CD4-positive, alpha-beta memory T cell (primary cell): ENCODE measurements at regions of chr19 and their contacts with region 1.

Region 1: DNA sequence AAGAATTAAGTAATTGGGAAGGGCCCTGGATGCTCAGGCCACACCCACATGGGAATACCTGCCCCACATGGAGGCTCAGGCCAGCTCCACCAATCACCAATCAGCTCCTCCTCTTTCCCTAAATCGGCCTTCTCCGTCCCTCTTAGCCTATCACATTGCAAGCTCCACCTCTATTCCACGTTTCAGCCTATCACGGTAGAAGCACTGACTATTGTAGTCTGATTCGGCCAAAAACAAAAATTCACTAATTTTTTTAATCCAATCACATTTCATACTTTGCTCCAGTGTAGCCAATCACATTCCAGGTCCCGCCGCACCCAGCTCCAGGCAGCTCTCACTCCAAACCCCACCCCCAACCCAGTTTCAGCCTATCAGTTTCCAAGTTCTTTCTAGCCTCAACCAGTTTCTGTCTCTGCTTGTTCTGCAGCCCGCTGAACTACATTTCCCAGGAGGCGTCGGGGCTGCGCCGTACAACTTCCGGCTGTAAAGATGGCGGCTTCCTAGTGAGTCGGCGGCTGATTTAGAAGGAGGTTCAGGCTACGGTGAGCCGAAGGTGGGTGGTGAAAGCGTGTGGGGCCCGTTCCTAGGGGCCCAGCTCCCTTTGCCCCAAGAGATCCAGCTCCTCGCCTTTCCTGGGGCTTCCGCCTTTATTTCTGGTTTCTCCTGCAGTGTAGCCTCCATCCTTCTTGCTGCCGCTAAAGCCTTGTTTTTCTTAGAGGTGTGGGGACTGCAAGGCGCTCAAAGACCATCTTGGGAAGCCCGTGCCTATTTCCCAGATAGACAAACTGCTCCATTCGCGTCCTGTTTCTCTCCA is at the start of gene BABAM1:
- DNase-seq: peak; percentile 97 to 99 (median 99)
- H3K4me3 ChIP-seq: peak within 1 kb of the TSS; percentile 90 to 98
- H3K4me3 Mint-ChIP-seq: peak within 1 kb of the TSS; percentile 83 to 92 (median 88)
- H3K27ac ChIP-seq: peak within 1 kb of the TSS; percentile 73
- H3K27ac Mint-ChIP-seq: peak within 1 kb of the TSS; percentile 81 to 95 (median 89)
- H3K4me1 ChIP-seq: peaks cover 26% of the 10 kb centered on the region
- H3K4me1 Mint-ChIP-seq: peaks cover 12 to 34% (median 26%) of the 10 kb centered on the region in 4 donors
- H3K27me3 ChIP-seq: no peaks in the 10 kb centered on the region
- H3K27me3 Mint-ChIP-seq: peaks cover 1 to 2% of the 10 kb centered on the region in 2 donors
- total RNA-seq, gene BABAM1: 101 to 112 TPM

Region 2: GRCh38 chr19:17075035-17075863 is 191.9 kb before region 1 on chr19 and contains the starts of genes HAUS8 and MYO9B:
- CTCF ChIA-PET with region 1: no interaction called
- POLR2A ChIA-PET with region 1: interaction called, 22 read pairs
- intact Hi-C with region 1: loop called (anchors 1 kb)
- DNase-seq: peak; percentile 99 to 100 (median 100)
- H3K4me3 ChIP-seq: peak within 1 kb of the TSS; percentile 91 to 93
- H3K4me3 Mint-ChIP-seq: peak within 1 kb of the TSS; percentile 96 to 100 (median 98)
- H3K27ac ChIP-seq: peak within 1 kb of the TSS; percentile 77
- H3K27ac Mint-ChIP-seq: peak within 1 kb of the TSS; percentile 89 to 99 (median 98)
- H3K4me1 ChIP-seq: peaks cover 56% of the 10 kb centered on the region
- H3K4me1 Mint-ChIP-seq: peaks cover 41 to 79% (median 53%) of the 10 kb centered on the region in 4 donors
- H3K27me3 ChIP-seq: no peaks in the 10 kb centered on the region
- H3K27me3 Mint-ChIP-seq: no peaks in the 10 kb centered on the region
- total RNA-seq, gene HAUS8: 20.0 to 20.9 TPM
- total RNA-seq, gene MYO9B: 176 to 181 TPM

Region 3: GRCh38 chr19:17215125-17215971 is 51.8 kb before region 1 on chr19 and contains the start of gene USE1:
- CTCF ChIA-PET with region 1: interaction called, 3 read pairs
- POLR2A ChIA-PET with region 1: interaction called, 39 read pairs
- intact Hi-C with region 1: loop called (anchors 1 kb)
- DNase-seq: peak; percentile 86 to 92 (median 88)
- H3K4me3 ChIP-seq: peak within 1 kb of the TSS; percentile 42 to 95
- H3K4me3 Mint-ChIP-seq: peak within 1 kb of the TSS; percentile 86 to 95 (median 91)
- H3K27ac ChIP-seq: peak within 1 kb of the TSS; percentile 79
- H3K27ac Mint-ChIP-seq: peak within 1 kb of the TSS; percentile 87 to 99 (median 99)
- H3K4me1 ChIP-seq: peaks cover 16% of the 10 kb centered on the region
- H3K4me1 Mint-ChIP-seq: peaks cover 2 to 21% (median 13%) of the 10 kb centered on the region in 4 donors
- H3K27me3 ChIP-seq: no peaks in the 10 kb centered on the region
- H3K27me3 Mint-ChIP-seq: no peaks in the 10 kb centered on the region
- total RNA-seq, gene USE1: 38.1 to 42.8 TPM

Region 4: DNA sequence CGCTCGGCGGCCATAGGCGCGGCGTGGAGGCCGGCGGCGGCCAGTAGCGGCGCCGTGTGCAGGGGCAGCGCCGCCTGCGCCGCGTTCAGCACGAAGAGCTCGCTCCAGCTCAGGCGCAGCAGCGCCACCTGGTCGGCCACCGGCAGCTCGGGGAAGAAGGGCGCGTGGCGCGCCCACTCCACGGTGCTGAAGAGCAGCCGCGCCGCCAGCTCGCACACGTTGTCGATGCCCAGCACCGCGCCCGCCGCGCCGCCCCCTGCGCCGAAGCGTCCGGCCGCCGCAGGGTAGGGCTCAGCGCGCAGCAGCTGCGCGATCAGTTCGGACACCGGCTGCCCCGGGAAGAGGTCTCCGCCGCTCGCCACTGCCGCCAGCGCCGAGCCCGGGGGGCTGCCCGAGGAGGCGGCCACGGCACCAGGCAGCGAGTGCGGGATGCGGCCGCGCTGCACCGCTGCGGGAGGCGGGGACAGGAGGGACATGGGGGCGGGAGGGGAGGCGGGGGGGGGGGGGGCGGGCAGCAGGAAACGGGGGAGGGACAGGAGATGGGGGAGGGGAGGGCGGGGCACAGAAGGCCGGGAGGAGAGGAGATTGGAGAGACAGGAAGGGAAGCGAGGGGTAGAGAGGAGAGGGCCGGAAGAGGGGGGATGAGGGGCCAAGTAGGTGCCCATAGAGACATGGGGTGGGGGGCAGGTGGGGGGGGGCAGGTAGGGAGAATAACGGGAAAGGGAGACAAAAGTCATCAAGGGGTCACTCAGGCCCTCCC is 31.4 kb before region 1 on chr19:
- CTCF ChIA-PET with region 1: interaction called, 3 read pairs
- POLR2A ChIA-PET with region 1: interaction called, 11 read pairs
- intact Hi-C with region 1: no loop called
- DNase-seq: peak; percentile 71 to 77 (median 73)
- H3K4me3 ChIP-seq: peak overlapping the region; percentile 69 to 84
- H3K4me3 Mint-ChIP-seq: peak overlapping the region; percentile 70 to 85 (median 78)
- H3K27ac ChIP-seq: peak overlapping the region; percentile 40
- H3K27ac Mint-ChIP-seq: peak overlapping the region in 1 of 7 donors; percentile 64
- H3K4me1 ChIP-seq: peaks cover 20% of the 10 kb centered on the region
- H3K4me1 Mint-ChIP-seq: peaks cover 2 to 28% (median 6%) of the 10 kb centered on the region in 4 donors
- H3K27me3 ChIP-seq: no peaks in the 10 kb centered on the region
- H3K27me3 Mint-ChIP-seq: no peaks in the 10 kb centered on the region

Region 5: DNA sequence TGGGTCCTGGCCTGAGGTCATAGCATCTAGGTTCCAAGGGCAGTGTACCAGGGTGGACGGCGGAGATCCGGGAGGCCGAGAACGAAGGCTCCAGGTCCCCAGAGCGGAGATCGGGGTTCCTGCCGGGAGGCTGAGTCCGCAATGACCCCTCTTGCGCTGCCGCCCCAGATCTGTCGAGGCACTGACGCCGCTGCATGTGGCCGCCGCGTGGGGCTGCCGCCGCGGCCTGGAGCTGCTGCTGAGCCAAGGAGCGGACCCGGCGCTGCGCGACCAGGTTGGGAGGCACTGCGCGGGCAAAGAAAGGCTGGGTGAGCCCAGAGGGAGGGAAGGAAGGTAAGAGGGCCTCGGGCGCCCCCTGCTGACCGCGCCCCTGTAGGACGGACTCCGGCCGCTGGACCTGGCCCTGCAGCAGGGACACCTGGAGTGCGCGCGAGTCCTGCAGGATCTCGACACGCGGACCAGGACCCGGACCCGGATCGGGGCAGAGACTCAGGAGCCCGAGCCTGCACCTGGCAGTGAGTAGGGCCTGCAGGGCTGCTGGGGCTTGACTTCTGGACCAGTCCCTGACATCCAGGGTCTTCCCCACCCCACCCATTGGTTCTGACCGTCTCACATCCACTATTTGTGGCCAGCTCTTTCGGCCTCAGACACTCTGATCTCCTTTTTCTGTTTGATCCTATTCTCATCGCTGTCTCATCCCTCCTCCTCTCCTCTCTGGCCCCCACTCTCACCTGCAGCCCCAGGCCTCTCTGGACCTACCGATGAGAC is 15.5 kb after region 1 on chr19:
- CTCF ChIA-PET with region 1: interaction called, 83 read pairs
- POLR2A ChIA-PET with region 1: interaction called, 6 read pairs
- intact Hi-C with region 1: no loop called
- DNase-seq: peak; percentile 72 to 79 (median 74)
- H3K4me3 ChIP-seq: peak overlapping the region; percentile 17 to 45
- H3K4me3 Mint-ChIP-seq: peak overlapping the region; percentile 73 to 86 (median 80)
- H3K27ac ChIP-seq: no peak overlapping the region
- H3K27ac Mint-ChIP-seq: peak overlapping the region in 2 of 7 donors; percentile 24 to 42
- H3K4me1 ChIP-seq: peaks cover 17% of the 10 kb centered on the region
- H3K4me1 Mint-ChIP-seq: peaks cover 2 to 4% (median 3%) of the 10 kb centered on the region in 4 donors
- H3K27me3 ChIP-seq: no peaks in the 10 kb centered on the region
- H3K27me3 Mint-ChIP-seq: no peaks in the 10 kb centered on the region

Region 6: GRCh38 chr19:17305517-17306284 is 38.5 kb after region 1 on chr19 and contains the start of gene MRPL34:
- CTCF ChIA-PET with region 1: interaction called, 4 read pairs
- POLR2A ChIA-PET with region 1: interaction called, 9 read pairs
- intact Hi-C with region 1: loop called (anchors 1 kb)
- DNase-seq: peak; percentile 94 to 98 (median 97)
- H3K4me3 ChIP-seq: peak within 1 kb of the TSS; percentile 85 to 90
- H3K4me3 Mint-ChIP-seq: peak within 1 kb of the TSS; percentile 90 to 94 (median 92)
- H3K27ac ChIP-seq: peak within 1 kb of the TSS; percentile 85
- H3K27ac Mint-ChIP-seq: peak within 1 kb of the TSS; percentile 69 to 96 (median 89)
- H3K4me1 ChIP-seq: peaks cover 57% of the 10 kb centered on the region
- H3K4me1 Mint-ChIP-seq: peaks cover 26 to 73% (median 49%) of the 10 kb centered on the region in 4 donors
- H3K27me3 ChIP-seq: no peaks in the 10 kb centered on the region
- H3K27me3 Mint-ChIP-seq: no peaks in the 10 kb centered on the region
- total RNA-seq, gene MRPL34: 69.4 to 74.1 TPM

Region 7: DNA sequence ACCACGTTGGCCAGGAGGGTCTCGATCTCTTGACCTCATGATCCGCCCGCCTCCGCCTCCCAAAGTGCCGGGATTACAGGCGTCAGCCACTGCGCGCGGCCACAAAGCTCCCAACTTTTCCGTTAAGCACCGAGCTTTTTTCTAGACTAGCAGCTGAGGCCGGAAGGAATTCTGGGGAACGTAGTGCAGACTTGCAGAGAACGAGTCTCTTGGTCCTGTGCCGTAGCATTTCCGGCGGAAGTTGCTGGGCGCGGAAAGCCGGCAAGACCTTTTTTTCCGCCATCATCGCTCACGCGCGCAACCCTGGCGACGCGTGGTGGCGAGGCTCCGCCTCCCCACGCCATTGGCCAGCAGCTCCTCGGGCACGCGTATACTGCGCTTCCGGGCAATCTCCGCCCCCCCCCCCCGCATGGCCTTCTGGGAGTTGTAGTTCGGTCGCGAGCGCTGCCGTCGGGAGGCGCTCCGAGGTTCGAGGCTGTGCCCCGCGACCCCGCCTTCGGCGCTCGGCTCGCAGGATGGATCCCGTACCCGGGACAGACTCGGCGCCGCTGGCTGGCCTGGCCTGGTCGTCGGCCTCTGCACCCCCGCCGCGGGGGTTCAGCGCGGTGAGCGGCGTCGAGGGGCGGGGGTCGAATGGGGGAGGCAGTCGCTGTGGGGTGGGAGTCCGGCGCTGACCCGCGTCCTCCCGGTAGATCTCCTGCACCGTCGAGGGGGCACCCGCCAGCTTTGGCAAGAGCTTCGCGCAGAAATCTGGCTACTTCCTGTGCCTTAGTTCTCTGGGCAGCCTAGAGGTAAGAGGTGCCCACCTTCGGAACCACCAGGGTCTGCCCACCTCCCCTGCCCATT is 152.7 kb after region 1 on chr19 and contains the start of gene MVB12A:
- CTCF ChIA-PET with region 1: interaction called, 3 read pairs
- POLR2A ChIA-PET with region 1: interaction called, 5 read pairs
- intact Hi-C with region 1: loop called (anchors 1 kb)
- DNase-seq: peak; percentile 94 to 98 (median 97)
- H3K4me3 ChIP-seq: peak within 1 kb of the TSS; percentile 69 to 92
- H3K4me3 Mint-ChIP-seq: peak within 1 kb of the TSS; percentile 91 to 97 (median 94)
- H3K27ac ChIP-seq: peak within 1 kb of the TSS; percentile 67
- H3K27ac Mint-ChIP-seq: peak within 1 kb of the TSS; percentile 91 to 96 (median 93)
- H3K4me1 ChIP-seq: peaks cover 17% of the 10 kb centered on the region
- H3K4me1 Mint-ChIP-seq: peaks cover 13 to 26% (median 16%) of the 10 kb centered on the region in 4 donors
- H3K27me3 ChIP-seq: no peaks in the 10 kb centered on the region
- H3K27me3 Mint-ChIP-seq: no peaks in the 10 kb centered on the region
- total RNA-seq, gene MVB12A: 35.4 to 38.0 TPM